CD4-positive, alpha-beta memory T cell (primary cell): ENCODE measurements at regions of chr14 and their contacts with region 1.

Region 1: DNA sequence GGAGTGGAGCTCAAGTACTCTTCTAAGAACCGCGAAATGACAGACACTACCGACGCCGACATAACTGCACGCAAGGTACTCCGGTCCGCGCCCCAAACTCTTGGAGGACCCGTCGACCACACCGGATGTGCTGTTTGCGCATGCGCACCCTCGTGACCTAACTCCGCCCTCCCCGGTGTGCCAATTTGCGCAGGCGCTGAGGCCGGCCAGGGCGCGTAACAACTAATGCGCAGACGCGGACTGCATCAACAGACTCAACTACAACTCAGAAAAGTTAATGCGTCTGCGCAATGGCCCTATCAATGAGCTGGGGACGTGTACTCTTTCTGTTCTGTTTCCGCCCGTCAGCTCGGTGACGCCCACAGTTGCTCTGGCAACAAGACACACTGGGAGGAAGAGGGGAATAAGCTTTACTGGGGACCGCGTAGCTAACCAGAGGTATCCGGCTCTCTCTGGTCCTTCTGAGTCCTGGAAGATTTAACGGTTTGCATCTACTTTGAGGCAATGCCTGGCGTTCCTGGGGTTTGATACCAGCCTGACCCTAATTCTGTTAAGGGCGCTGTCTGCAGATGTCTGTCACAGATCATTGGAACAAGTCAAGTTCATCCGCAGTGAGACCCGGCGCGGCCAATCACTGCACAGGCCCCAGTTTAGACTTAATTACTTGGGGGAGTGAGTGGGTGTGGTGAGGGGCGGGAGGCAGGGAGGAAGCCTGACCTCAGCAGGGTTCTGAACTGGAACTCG is at the start of gene DAD1:
- DNase-seq: peak; percentile 100
- H3K4me3 ChIP-seq: peak within 1 kb of the TSS; percentile 85 to 87
- H3K4me3 Mint-ChIP-seq: peak within 1 kb of the TSS; percentile 92 to 100 (median 97)
- H3K27ac ChIP-seq: peak within 1 kb of the TSS; percentile 88
- H3K27ac Mint-ChIP-seq: peak within 1 kb of the TSS; percentile 99 to 100 (median 99)
- H3K4me1 ChIP-seq: peaks cover 50% of the 10 kb centered on the region
- H3K4me1 Mint-ChIP-seq: peaks cover 39 to 63% (median 51%) of the 10 kb centered on the region in 4 donors
- H3K27me3 ChIP-seq: no peaks in the 10 kb centered on the region
- H3K27me3 Mint-ChIP-seq: peaks cover 2% of the 10 kb centered on the region in 2 donors
- total RNA-seq, gene DAD1: 110 to 124 TPM

Region 2: GRCh38 chr14:21510735-21511657 is 1078.3 kb before region 1 on chr14 and contains the start of gene METTL3:
- CTCF ChIA-PET with region 1: no interaction called
- POLR2A ChIA-PET with region 1: no interaction called
- intact Hi-C with region 1: loop called (anchors 1 kb)
- DNase-seq: peak; percentile 91 to 97 (median 92)
- H3K4me3 ChIP-seq: peak within 1 kb of the TSS; percentile 93 to 100
- H3K4me3 Mint-ChIP-seq: peak within 1 kb of the TSS; percentile 97 to 100 (median 98)
- H3K27ac ChIP-seq: peak within 1 kb of the TSS; percentile 88
- H3K27ac Mint-ChIP-seq: peak within 1 kb of the TSS; percentile 94 to 100 (median 99)
- H3K4me1 ChIP-seq: peaks cover 38% of the 10 kb centered on the region
- H3K4me1 Mint-ChIP-seq: peaks cover 27 to 51% (median 37%) of the 10 kb centered on the region in 4 donors
- H3K27me3 ChIP-seq: no peaks in the 10 kb centered on the region
- H3K27me3 Mint-ChIP-seq: no peaks in the 10 kb centered on the region
- total RNA-seq, gene METTL3: 93.4 to 98.9 TPM

Region 3: GRCh38 chr14:22536853-22537338 is 52.4 kb before region 1 on chr14:
- CTCF ChIA-PET with region 1: interaction called, 3 read pairs
- POLR2A ChIA-PET with region 1: interaction called, 26 read pairs
- intact Hi-C with region 1: no loop called
- DNase-seq: peak in 4 of 5 donors; percentile 54 to 97 (median 62)
- H3K4me3 ChIP-seq: peak overlapping the region; percentile 13 to 46
- H3K4me3 Mint-ChIP-seq: peak overlapping the region; percentile 69 to 91 (median 85)
- H3K27ac ChIP-seq: peak overlapping the region; percentile 72
- H3K27ac Mint-ChIP-seq: peak overlapping the region; percentile 92 to 100 (median 98)
- H3K4me1 ChIP-seq: peaks cover 99% of the 10 kb centered on the region
- H3K4me1 Mint-ChIP-seq: peaks cover 86 to 100% (median 91%) of the 10 kb centered on the region in 4 donors
- H3K27me3 ChIP-seq: no peaks in the 10 kb centered on the region
- H3K27me3 Mint-ChIP-seq: no peaks in the 10 kb centered on the region

Region 4: GRCh38 chr14:22579236-22579635 is 10.0 kb before region 1 on chr14:
- CTCF ChIA-PET with region 1: interaction called, 174 read pairs
- POLR2A ChIA-PET with region 1: interaction called, 12 read pairs
- intact Hi-C with region 1: no loop called
- DNase-seq: no peak
- H3K4me3 ChIP-seq: no peak overlapping the region
- H3K4me3 Mint-ChIP-seq: peak overlapping the region in 4 of 8 donors; percentile 1 to 76 (median 19)
- H3K27ac ChIP-seq: no peak overlapping the region
- H3K27ac Mint-ChIP-seq: peak overlapping the region; percentile 1 to 87 (median 54)
- H3K4me1 ChIP-seq: peaks cover 37% of the 10 kb centered on the region
- H3K4me1 Mint-ChIP-seq: peaks cover 41 to 66% (median 53%) of the 10 kb centered on the region in 4 donors
- H3K27me3 ChIP-seq: no peaks in the 10 kb centered on the region
- H3K27me3 Mint-ChIP-seq: no peaks in the 10 kb centered on the region

Region 5: DNA sequence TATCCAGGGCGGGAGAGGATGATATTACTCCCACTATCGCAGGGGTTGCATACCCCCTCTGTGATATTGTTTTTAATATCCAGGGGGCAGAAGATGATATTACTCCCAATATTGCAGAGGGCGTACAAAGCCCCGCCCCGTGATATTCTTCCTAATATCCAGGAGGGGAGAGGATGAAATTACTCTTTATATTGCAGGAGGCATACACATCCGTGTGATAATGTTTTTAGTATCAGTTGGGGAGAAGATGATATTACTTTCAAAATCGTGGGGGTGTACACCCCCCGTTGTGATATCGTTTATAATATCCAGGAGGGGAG is 124.3 kb after region 1 on chr14:
- CTCF ChIA-PET with region 1: no interaction called
- POLR2A ChIA-PET with region 1: no interaction called
- intact Hi-C with region 1: loop called (anchors 5 kb)
- DNase-seq: no peak
- H3K4me3 ChIP-seq: peak overlapping the region in 1 of 2 donors; percentile 28
- H3K4me3 Mint-ChIP-seq: peak overlapping the region; percentile 81 to 92 (median 86)
- H3K27ac ChIP-seq: no peak overlapping the region
- H3K27ac Mint-ChIP-seq: peak overlapping the region in 3 of 7 donors; percentile 48 to 94 (median 81)
- H3K4me1 ChIP-seq: no peaks in the 10 kb centered on the region
- H3K4me1 Mint-ChIP-seq: peaks cover 5 to 13% (median 10%) of the 10 kb centered on the region in 4 donors
- H3K27me3 ChIP-seq: no peaks in the 10 kb centered on the region
- H3K27me3 Mint-ChIP-seq: peaks cover 13 to 31% of the 10 kb centered on the region in 2 donors

Region 6: GRCh38 chr14:22781586-22781991 is 192.3 kb after region 1 on chr14:
- CTCF ChIA-PET with region 1: no interaction called
- POLR2A ChIA-PET with region 1: no interaction called
- intact Hi-C with region 1: no loop called
- DNase-seq: no peak
- H3K4me3 ChIP-seq: no peak overlapping the region
- H3K4me3 Mint-ChIP-seq: peak overlapping the region in 1 of 8 donors; percentile 60
- H3K27ac ChIP-seq: no peak overlapping the region
- H3K27ac Mint-ChIP-seq: peak overlapping the region in 3 of 7 donors; percentile 42 to 62 (median 60)
- H3K4me1 ChIP-seq: no peaks in the 10 kb centered on the region
- H3K4me1 Mint-ChIP-seq: no peaks in the 10 kb centered on the region
- H3K27me3 ChIP-seq: no peaks in the 10 kb centered on the region
- H3K27me3 Mint-ChIP-seq: peaks cover 0 to 2% of the 10 kb centered on the region in 2 donors

Region 7: GRCh38 chr14:22829661-22830442 is 240.6 kb after region 1 on chr14 and contains the start of gene MRPL52:
- CTCF ChIA-PET with region 1: interaction called, 3 read pairs
- POLR2A ChIA-PET with region 1: interaction called, 4 read pairs
- intact Hi-C with region 1: loop called (anchors 1 kb)
- DNase-seq: peak; percentile 86 to 93 (median 88)
- H3K4me3 ChIP-seq: peak within 1 kb of the TSS; percentile 80 to 85
- H3K4me3 Mint-ChIP-seq: peak within 1 kb of the TSS; percentile 91 to 96 (median 92)
- H3K27ac ChIP-seq: peak within 1 kb of the TSS; percentile 85
- H3K27ac Mint-ChIP-seq: peak within 1 kb of the TSS; percentile 96 to 99 (median 98)
- H3K4me1 ChIP-seq: peaks cover 18% of the 10 kb centered on the region
- H3K4me1 Mint-ChIP-seq: peaks cover 17 to 32% (median 24%) of the 10 kb centered on the region in 4 donors
- H3K27me3 ChIP-seq: no peaks in the 10 kb centered on the region
- H3K27me3 Mint-ChIP-seq: peaks cover 0 to 1% of the 10 kb centered on the region in 2 donors
- total RNA-seq, gene MRPL52: 58.0 to 68.3 TPM

Region 8: GRCh38 chr14:22918804-22919600 is 329.7 kb after region 1 on chr14 and contains the start of gene RBM23:
- CTCF ChIA-PET with region 1: no interaction called
- POLR2A ChIA-PET with region 1: interaction called, 15 read pairs
- intact Hi-C with region 1: loop called (anchors 1 kb)
- DNase-seq: peak; percentile 99 to 100 (median 100)
- H3K4me3 ChIP-seq: peak within 1 kb of the TSS; percentile 67 to 93
- H3K4me3 Mint-ChIP-seq: peak within 1 kb of the TSS; percentile 94 to 99 (median 96)
- H3K27ac ChIP-seq: peak within 1 kb of the TSS; percentile 98
- H3K27ac Mint-ChIP-seq: peak within 1 kb of the TSS; percentile 99 to 100 (median 100)
- H3K4me1 ChIP-seq: peaks cover 40% of the 10 kb centered on the region
- H3K4me1 Mint-ChIP-seq: peaks cover 13 to 56% (median 33%) of the 10 kb centered on the region in 4 donors
- H3K27me3 ChIP-seq: no peaks in the 10 kb centered on the region
- H3K27me3 Mint-ChIP-seq: peaks cover 0 to 4% of the 10 kb centered on the region in 2 donors
- total RNA-seq, gene RBM23: 119 to 123 TPM